PC-3 (cell line): ENCODE measurements at regions of chr5 and their contacts with region 1.

Region 1: GRCh38 chr5:72816311-72817145 is at the start of gene TNPO1:
- DNase-seq: peak; percentile 85
- ATAC-seq: peak; percentile 87
- H3K4me3 ChIP-seq: peak within 1 kb of the TSS; percentile 86
- H3K27ac ChIP-seq: peak within 1 kb of the TSS; percentile 85
- H3K4me1 ChIP-seq: peaks cover 23% of the 10 kb centered on the region
- H3K27me3 ChIP-seq: no peaks in the 10 kb centered on the region
- CTCF ChIP-seq: no peak
- total RNA-seq, gene TNPO1: 187 and 197 TPM in 2 replicates

Region 2: DNA sequence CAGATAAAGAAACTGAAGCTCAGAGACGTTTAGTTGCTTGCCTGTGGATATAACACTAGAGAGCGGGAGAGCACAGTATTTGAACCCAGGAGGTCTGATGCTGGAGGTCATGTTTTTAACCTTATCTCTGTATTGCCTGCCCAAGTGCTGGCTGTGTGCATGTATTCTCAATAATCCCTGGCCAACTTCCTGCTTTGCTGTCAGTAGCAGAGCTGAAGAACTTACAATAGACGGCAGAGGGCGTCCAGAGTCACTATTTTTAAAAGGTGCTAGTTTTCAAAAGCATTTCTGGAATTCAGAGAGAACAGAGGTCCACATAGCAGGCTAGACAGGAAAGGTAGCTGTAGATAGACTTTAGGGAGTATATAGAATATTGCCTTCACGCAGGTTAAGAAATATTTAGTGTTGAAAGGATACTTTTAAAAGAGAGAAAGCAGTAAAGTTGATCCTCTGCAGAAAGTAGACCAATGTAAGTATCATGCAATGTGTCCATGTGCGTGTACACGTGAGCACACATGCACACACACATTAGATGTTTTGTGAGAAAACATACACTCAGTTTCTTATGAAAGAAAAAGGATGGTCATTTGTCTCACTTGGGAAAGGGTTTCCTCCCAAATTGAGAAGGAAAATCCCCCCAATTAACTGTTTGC is 450.1 kb before region 1 on chr5:
- CTCF ChIA-PET with region 1: no interaction called
- POLR2A ChIA-PET with region 1: no interaction called
- intact Hi-C with region 1: loop called (anchors 5 kb)
- DNase-seq: peak; percentile 78
- ATAC-seq: peak; percentile 73
- H3K4me3 ChIP-seq: no peak overlapping the region
- H3K27ac ChIP-seq: no peak overlapping the region
- H3K4me1 ChIP-seq: peaks cover 19% of the 10 kb centered on the region
- H3K27me3 ChIP-seq: no peaks in the 10 kb centered on the region
- CTCF ChIP-seq: peak; percentile 83

Region 3: DNA sequence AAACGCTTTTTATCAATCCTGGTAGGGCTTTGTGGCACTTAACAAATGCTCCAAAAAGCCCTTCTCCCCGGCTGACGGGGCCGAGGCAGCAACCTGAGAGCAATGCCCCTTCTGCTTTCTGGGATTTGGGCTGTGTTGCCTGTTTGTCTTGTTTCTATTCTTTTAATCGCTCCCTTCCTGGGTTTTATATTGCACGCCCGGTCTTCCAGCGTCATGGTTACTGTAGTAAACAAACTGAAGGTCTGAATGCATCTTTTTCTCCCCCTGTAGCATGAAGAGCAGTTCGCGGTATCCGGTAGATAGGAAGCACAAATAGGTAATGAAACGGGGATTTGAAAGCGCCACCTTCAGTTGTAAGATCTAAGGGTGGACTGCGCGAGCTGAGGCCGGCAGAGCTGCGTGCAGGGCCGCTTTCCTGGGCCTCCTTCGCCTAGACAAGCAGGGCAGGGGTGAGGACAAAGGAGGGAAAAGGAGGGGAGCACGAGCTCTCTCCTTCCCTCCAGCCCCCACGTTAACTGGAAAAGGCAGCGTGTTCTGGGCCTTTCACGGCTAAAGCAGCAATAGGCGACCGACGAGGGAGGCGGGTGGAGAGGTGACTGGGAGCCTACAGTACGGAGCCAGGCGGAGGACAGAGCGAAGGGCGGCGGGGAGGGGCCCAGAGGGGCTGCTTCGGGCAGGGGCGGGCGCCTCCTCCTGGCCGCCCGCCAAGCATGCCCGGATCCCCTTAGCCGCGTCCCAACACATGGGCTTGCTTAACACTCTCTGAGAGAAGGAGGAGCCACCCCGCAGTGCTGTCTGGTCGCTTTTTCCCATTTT is 260.0 kb before region 1 on chr5:
- CTCF ChIA-PET with region 1: no interaction called
- POLR2A ChIA-PET with region 1: no interaction called
- intact Hi-C with region 1: loop called (anchors 10 kb)
- DNase-seq: peak; percentile 60
- ATAC-seq: peak; percentile 81
- H3K4me3 ChIP-seq: peak overlapping the region; percentile 50
- H3K27ac ChIP-seq: peak overlapping the region; percentile 21
- H3K4me1 ChIP-seq: peaks cover 23% of the 10 kb centered on the region
- H3K27me3 ChIP-seq: no peaks in the 10 kb centered on the region
- CTCF ChIP-seq: peak; percentile 35

Region 4: GRCh38 chr5:72611118-72611730 is 205.3 kb before region 1 on chr5:
- CTCF ChIA-PET with region 1: interaction called, 14 read pairs
- POLR2A ChIA-PET with region 1: interaction called, 5 read pairs
- intact Hi-C with region 1: loop called (anchors 1 kb)
- DNase-seq: peak; percentile 69
- ATAC-seq: peak; percentile 73
- H3K4me3 ChIP-seq: no peak overlapping the region
- H3K27ac ChIP-seq: no peak overlapping the region
- H3K4me1 ChIP-seq: peaks cover 21% of the 10 kb centered on the region
- H3K27me3 ChIP-seq: no peaks in the 10 kb centered on the region
- CTCF ChIP-seq: peak; percentile 87

Region 5: DNA sequence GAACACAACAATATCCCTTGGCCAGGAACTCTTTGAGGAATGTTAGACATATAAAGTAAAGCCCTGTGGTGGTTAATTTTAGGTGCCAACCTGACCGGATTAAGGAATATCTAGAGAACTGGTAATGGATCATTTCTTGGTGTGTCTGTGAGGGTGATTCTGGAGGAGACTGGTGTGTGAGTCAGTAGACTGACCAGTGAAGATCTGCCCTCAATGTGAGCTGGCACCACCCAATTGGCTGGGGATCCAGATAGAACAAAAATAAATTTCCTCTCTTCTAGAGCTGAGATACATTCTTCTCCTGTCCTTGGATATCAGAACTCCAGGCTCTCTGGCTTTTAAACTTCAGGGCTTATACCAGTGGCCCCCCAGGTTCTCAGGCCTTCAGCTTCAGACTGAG is 56.3 kb before region 1 on chr5:
- CTCF ChIA-PET with region 1: no interaction called
- POLR2A ChIA-PET with region 1: no interaction called
- intact Hi-C with region 1: no loop called
- DNase-seq: peak; percentile 7
- ATAC-seq: no peak
- H3K4me3 ChIP-seq: no peak overlapping the region
- H3K27ac ChIP-seq: no peak overlapping the region
- H3K4me1 ChIP-seq: no peaks in the 10 kb centered on the region
- H3K27me3 ChIP-seq: no peaks in the 10 kb centered on the region
- CTCF ChIP-seq: no peak

Region 6: DNA sequence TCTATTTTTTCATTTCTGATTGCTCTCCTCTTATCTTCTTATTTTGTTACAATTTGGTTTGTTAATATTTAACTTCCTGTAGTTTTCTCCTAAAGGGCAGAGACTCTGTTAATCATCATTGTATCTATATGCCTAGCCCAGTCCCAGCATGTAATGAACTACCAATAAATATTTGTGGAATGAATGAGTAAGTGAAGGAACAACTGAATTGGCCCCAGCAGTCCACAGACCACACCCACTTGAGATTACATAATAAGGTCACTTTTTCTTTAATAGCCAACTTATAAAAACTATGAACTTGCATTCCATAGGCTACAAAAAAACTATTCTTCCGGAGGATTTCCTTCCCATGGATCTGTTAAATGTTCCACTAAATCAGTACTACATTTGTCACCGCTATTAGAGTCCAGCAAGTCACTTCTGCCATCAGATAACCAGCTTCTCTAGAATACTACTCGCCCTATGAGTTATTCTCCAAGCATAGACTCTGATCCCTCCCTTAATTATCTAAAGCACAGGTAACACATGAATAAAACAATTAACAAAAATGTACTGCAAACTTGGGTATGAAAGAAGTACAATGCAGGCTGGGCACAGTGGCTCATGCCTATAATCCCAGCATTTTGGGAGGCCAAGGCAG is 27.5 kb before region 1 on chr5:
- CTCF ChIA-PET with region 1: no interaction called
- POLR2A ChIA-PET with region 1: no interaction called
- intact Hi-C with region 1: loop called (anchors 2 kb)
- DNase-seq: peak; percentile 82
- ATAC-seq: peak; percentile 97
- H3K4me3 ChIP-seq: no peak overlapping the region
- H3K27ac ChIP-seq: peak overlapping the region; percentile 73
- H3K4me1 ChIP-seq: peaks cover 21% of the 10 kb centered on the region
- H3K27me3 ChIP-seq: no peaks in the 10 kb centered on the region
- CTCF ChIP-seq: no peak